ENCODE measurements at regions of chr10 and their contacts with region 1.

Region 1: GRCh38 chr10:35218339-35218955 is 91.8 kb downstream of the CREM start:
- DNase-seq: peak; percentile 77 to 84 (median 78)
- ATAC-seq: peak; percentile 64 to 72 (median 68)
- H3K4me3 ChIP-seq: no peak overlapping the region
- H3K27ac ChIP-seq: peak overlapping the region in 1 of 3 donors; percentile 90
- H3K4me1 ChIP-seq: peaks cover 0 to 50% (median 11%) of the 10 kb centered on the region in 4 donors
- H3K27me3 ChIP-seq: no peaks in the 10 kb centered on the region
- CTCF ChIP-seq: peak; percentile 80 to 98 (median 86)
- POLR2A ChIP-seq: peak; percentile 18

Region 2: GRCh38 chr10:35126530-35127296 is 91.7 kb before region 1 on chr10 and contains the start of gene CREM:
- intact Hi-C with region 1: loop called in 1 of 2 experiments (anchors 10 kb)
- DNase-seq: peak; percentile 100
- ATAC-seq: peak; percentile 91 to 96 (median 94)
- H3K4me3 ChIP-seq: peak within 1 kb of the TSS; percentile 59 to 67 (median 66)
- H3K27ac ChIP-seq: peak within 1 kb of the TSS; percentile 98 to 100 (median 99)
- H3K4me1 ChIP-seq: peaks cover 0 to 31% (median 0%) of the 10 kb centered on the region in 4 donors
- H3K27me3 ChIP-seq: no peaks in the 10 kb centered on the region
- CTCF ChIP-seq: peak; percentile 82 to 93 (median 84)
- POLR2A ChIP-seq: peak; percentile 100
- total RNA-seq, gene CREM: 16.3 to 34.1 (median 22.9) TPM

Region 3: GRCh38 chr10:35140727-35141126 is 77.7 kb before region 1 on chr10:
- intact Hi-C with region 1: loop called in 1 of 2 experiments (anchors 10 kb)
- DNase-seq: peak in 1 of 3 donors; percentile 57
- ATAC-seq: peak; percentile 91 to 96 (median 92)
- H3K4me3 ChIP-seq: no peak overlapping the region
- H3K27ac ChIP-seq: peak overlapping the region in 1 of 3 donors; percentile 29
- H3K4me1 ChIP-seq: peaks cover 0 to 5% (median 2%) of the 10 kb centered on the region in 4 donors
- H3K27me3 ChIP-seq: no peaks in the 10 kb centered on the region
- CTCF ChIP-seq: no peak
- POLR2A ChIP-seq: no peak

Measured in right lobe of liver (tissue), 6 donors.